HCT116 (cell line): ENCODE measurements at regions of chr6 and their contacts with region 1.

Region 1: GRCh38 chr6:27838058-27838944 is 73.9 kb downstream of the OR2B2 start:
- DNase-seq: peak; percentile 100
- ATAC-seq: peak; percentile 75
- H3K4me3 ChIP-seq: peak overlapping the region; percentile 65 to 78
- H3K27ac ChIP-seq: peak overlapping the region; percentile 98
- H3K4me1 ChIP-seq: peaks cover 23 to 36% of the 10 kb centered on the region in 2 experiments
- H3K27me3 ChIP-seq: no peaks in the 10 kb centered on the region
- CTCF ChIP-seq: no peak
- POLR2A ChIP-seq: peak; percentile 96
- RAD21 ChIP-seq: no peak

Region 2: DNA sequence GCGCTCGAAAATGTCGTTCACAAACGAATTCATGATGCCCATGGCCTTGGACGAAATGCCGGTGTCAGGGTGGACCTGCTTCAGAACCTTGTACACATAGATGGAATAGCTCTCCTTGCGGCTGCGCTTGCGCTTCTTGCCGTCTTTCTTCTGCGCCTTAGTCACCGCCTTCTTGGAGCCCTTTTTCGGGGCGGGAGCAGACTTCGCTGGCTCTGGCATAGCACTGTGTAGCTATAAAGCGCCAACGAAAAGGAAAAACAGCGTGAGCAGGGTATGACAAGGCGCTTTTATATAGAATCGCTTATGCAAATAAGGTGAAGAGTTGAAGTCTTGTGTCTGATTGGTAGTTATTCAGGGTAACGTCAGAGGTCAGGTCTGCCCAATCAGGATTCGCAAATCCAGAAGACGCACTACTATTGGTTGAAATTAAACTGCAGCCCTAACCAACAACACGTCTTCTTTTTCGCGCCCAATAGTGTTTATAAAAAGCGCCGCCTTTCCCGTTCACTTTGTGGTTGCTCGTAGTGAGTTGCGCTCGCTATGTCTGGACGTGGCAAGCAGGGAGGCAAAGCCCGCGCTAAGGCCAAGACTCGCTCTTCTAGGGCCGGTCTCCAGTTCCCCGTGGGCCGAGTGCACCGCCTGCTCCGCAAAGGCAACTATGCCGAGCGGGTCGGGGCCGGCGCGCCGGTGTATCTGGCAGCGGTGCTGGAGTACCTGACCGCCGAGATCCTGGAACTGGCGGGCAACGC is 705.6 kb before region 1 on chr6:
- CTCF ChIA-PET with region 1: no interaction called
- POLR2A ChIA-PET with region 1: interaction called, 25 read pairs
- RAD21 ChIA-PET with region 1: no interaction called
- intact Hi-C with region 1: no loop called
- DNase-seq: peak; percentile 100
- ATAC-seq: peak; percentile 75
- H3K4me3 ChIP-seq: peak overlapping the region; percentile 62 to 71
- H3K27ac ChIP-seq: peak overlapping the region; percentile 99
- H3K4me1 ChIP-seq: peaks cover 21 to 38% of the 10 kb centered on the region in 2 experiments
- H3K27me3 ChIP-seq: no peaks in the 10 kb centered on the region
- CTCF ChIP-seq: no peak
- POLR2A ChIP-seq: peak; percentile 98
- RAD21 ChIP-seq: no peak

Region 3: GRCh38 chr6:27809939-27810767 is 28.1 kb before region 1 on chr6:
- CTCF ChIA-PET with region 1: no interaction called
- POLR2A ChIA-PET with region 1: interaction called, 221 read pairs
- RAD21 ChIA-PET with region 1: no interaction called
- intact Hi-C with region 1: no loop called
- DNase-seq: peak; percentile 97
- ATAC-seq: peak; percentile 43
- H3K4me3 ChIP-seq: peak overlapping the region; percentile 59 to 69
- H3K27ac ChIP-seq: peak overlapping the region; percentile 88
- H3K4me1 ChIP-seq: peaks cover 36 to 64% of the 10 kb centered on the region in 2 experiments
- H3K27me3 ChIP-seq: no peaks in the 10 kb centered on the region
- CTCF ChIP-seq: no peak
- POLR2A ChIP-seq: peak; percentile 92
- RAD21 ChIP-seq: no peak

Region 4: GRCh38 chr6:27825025-27825793 is 13.1 kb before region 1 on chr6:
- CTCF ChIA-PET with region 1: interaction called, 3 read pairs
- POLR2A ChIA-PET with region 1: interaction called, 173 read pairs
- RAD21 ChIA-PET with region 1: interaction called in 1 of 2 experiments, 3 read pairs
- intact Hi-C with region 1: no loop called
- DNase-seq: no peak
- ATAC-seq: no peak
- H3K4me3 ChIP-seq: peak overlapping the region; percentile 50 to 71
- H3K27ac ChIP-seq: peak overlapping the region; percentile 76
- H3K4me1 ChIP-seq: peaks cover 5 to 39% of the 10 kb centered on the region in 2 experiments; a peak in 3 of 4 replicates
- H3K27me3 ChIP-seq: no peaks in the 10 kb centered on the region
- CTCF ChIP-seq: no peak
- POLR2A ChIP-seq: no peak
- RAD21 ChIP-seq: no peak

Region 5: GRCh38 chr6:27864906-27865849 is 26.9 kb after region 1 on chr6:
- CTCF ChIA-PET with region 1: no interaction called
- POLR2A ChIA-PET with region 1: interaction called, 27 read pairs
- RAD21 ChIA-PET with region 1: no interaction called
- intact Hi-C with region 1: no loop called
- DNase-seq: no peak
- ATAC-seq: no peak
- H3K4me3 ChIP-seq: no peak overlapping the region
- H3K27ac ChIP-seq: no peak overlapping the region
- H3K4me1 ChIP-seq: peaks cover 2 to 9% of the 10 kb centered on the region in 2 experiments; a peak in 2 of 4 replicates
- H3K27me3 ChIP-seq: no peaks in the 10 kb centered on the region
- CTCF ChIP-seq: no peak
- POLR2A ChIP-seq: no peak
- RAD21 ChIP-seq: no peak

Region 6: DNA sequence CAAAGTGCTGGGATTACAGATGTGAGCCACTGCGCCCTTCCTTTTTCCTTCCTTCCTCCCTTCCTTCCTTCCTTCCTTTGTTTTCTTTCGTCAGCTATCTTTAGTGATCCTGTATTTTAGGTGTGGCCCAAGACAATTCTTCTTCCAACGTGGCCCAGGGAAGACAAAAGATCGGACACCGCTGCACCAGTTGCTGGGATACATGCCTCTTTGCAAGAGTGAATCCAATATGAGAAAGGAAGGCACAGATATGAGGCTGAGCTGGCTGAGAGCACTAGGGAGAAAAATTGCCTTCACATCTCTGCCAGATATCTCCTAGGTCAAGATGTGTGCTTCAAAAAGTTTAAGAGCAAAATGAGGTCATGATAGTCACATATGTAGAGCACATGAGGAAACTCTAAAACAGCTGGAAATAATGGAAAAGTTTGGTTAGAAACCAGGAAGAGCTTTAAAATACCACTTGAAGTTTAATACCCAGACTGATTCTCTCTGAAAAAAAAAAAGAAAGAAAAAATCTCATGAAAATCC is 32.1 kb after region 1 on chr6:
- CTCF ChIA-PET with region 1: no interaction called
- POLR2A ChIA-PET with region 1: interaction called, 27 read pairs
- RAD21 ChIA-PET with region 1: no interaction called
- intact Hi-C with region 1: no loop called
- DNase-seq: no peak
- ATAC-seq: no peak
- H3K4me3 ChIP-seq: no peak overlapping the region
- H3K27ac ChIP-seq: no peak overlapping the region
- H3K4me1 ChIP-seq: no peaks in the 10 kb centered on the region
- H3K27me3 ChIP-seq: no peaks in the 10 kb centered on the region
- CTCF ChIP-seq: no peak
- POLR2A ChIP-seq: no peak
- RAD21 ChIP-seq: no peak